Activated CD4-positive, alpha-beta memory T cell treated with anti-CD3 and anti-CD28 coated beads for 36 hours (primary cell): ENCODE measurements at regions of chr14 and their contacts with region 1.

Region 1: DNA sequence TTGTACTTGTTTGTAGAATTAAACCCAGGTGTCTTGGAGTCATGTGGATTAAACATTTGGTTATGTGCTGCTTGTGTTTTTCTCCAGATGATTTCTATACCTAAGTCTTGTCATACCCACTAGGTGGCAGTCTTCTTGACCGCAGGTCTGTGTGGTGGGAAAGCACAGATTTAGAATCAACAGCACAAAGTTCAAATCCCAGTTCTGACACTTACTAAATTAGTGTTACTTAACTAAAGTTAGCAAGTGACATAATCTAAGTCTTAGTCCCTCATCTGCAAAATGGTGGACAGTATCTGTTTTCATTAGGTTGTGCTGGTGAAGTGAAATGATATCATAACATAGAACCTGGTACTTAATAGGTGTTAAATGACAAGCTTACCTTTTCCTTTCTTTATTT is 151.0 kb upstream of the ARHGAP5 start:
- DNase-seq: peak; percentile 21
- H3K4me3 Mint-ChIP-seq: no peak overlapping the region
- H3K27ac Mint-ChIP-seq: no peak overlapping the region
- H3K4me1 Mint-ChIP-seq: peaks cover 17% of the 10 kb centered on the region
- H3K27me3 Mint-ChIP-seq: no peaks in the 10 kb centered on the region

Region 2: DNA sequence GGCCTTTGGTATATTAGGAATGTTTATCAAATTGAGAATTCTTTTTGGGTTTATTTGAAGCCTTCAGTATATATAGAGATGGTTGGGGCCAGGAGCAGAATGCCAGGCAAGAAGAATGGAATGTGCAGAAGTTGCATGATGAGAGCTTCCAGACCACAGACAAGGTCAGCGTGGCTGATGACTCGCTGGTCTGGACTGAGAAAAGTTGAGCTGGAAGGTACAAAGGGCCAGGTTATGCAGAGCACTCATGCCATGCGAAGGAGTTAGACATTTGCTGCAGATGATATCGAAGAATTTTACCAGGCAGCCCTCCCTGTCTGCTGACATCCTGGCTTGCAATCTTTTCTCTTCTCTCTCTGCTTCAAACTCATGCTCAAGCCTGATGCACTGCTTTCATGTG is 45.2 kb before region 1 on chr14:
- CTCF ChIA-PET with region 1: no interaction called
- POLR2A ChIA-PET with region 1: no interaction called
- intact Hi-C with region 1: no loop called
- DNase-seq: no peak
- H3K4me3 Mint-ChIP-seq: no peak overlapping the region
- H3K27ac Mint-ChIP-seq: no peak overlapping the region
- H3K4me1 Mint-ChIP-seq: no peaks in the 10 kb centered on the region
- H3K27me3 Mint-ChIP-seq: no peaks in the 10 kb centered on the region

Region 3: DNA sequence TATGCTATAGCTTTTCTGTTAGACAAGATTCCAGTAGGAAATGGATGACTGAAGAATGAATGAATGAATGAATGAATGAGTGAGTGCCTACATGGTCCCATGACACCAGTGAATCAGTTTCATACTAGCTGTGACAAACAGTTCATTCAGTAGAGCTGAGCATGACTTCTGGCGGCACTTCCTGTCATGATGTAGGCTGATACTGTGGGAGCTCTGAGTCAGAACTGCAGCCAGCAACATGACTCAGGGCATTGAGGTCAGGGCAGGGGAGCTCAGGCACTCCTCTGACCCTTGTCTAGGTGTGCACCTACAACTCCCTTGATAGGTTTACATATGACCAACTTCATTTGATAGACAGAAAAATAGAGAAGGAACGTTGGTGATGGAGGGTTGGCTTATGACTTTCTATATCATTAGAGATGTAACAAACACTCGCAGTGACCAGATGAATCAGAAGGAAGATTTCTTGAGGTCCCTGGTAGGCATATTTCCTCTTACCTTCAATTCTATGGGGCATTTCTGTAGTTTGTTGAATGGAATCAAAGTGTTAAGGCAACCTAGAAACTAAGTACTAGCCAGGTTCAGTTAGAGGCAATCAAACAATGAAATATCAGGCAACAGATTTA is 11.7 kb after region 1 on chr14:
- CTCF ChIA-PET with region 1: interaction called, 30 read pairs
- POLR2A ChIA-PET with region 1: interaction called, 5 read pairs
- intact Hi-C with region 1: loop called (anchors 1 kb)
- DNase-seq: peak; percentile 91
- H3K4me3 Mint-ChIP-seq: peak overlapping the region; percentile 16
- H3K27ac Mint-ChIP-seq: peak overlapping the region; percentile 80
- H3K4me1 Mint-ChIP-seq: peaks cover 25% of the 10 kb centered on the region
- H3K27me3 Mint-ChIP-seq: no peaks in the 10 kb centered on the region

Region 4: GRCh38 chr14:31945074-31945613 is 19.0 kb after region 1 on chr14:
- CTCF ChIA-PET with region 1: interaction called, 30 read pairs
- POLR2A ChIA-PET with region 1: no interaction called
- intact Hi-C with region 1: no loop called
- DNase-seq: peak; percentile 48
- H3K4me3 Mint-ChIP-seq: no peak overlapping the region
- H3K27ac Mint-ChIP-seq: peak overlapping the region; percentile 59
- H3K4me1 Mint-ChIP-seq: peaks cover 44% of the 10 kb centered on the region
- H3K27me3 Mint-ChIP-seq: no peaks in the 10 kb centered on the region

Region 5: GRCh38 chr14:32469388-32470160 is 543.5 kb after region 1 on chr14:
- CTCF ChIA-PET with region 1: no interaction called
- POLR2A ChIA-PET with region 1: no interaction called
- intact Hi-C with region 1: loop called (anchors 2 kb)
- DNase-seq: no peak
- H3K4me3 Mint-ChIP-seq: no peak overlapping the region
- H3K27ac Mint-ChIP-seq: no peak overlapping the region
- H3K4me1 Mint-ChIP-seq: no peaks in the 10 kb centered on the region
- H3K27me3 Mint-ChIP-seq: no peaks in the 10 kb centered on the region

Region 6: GRCh38 chr14:32560209-32560857 is 634.2 kb after region 1 on chr14:
- CTCF ChIA-PET with region 1: interaction called, 4 read pairs
- POLR2A ChIA-PET with region 1: no interaction called
- intact Hi-C with region 1: loop called (anchors 2 kb)
- DNase-seq: peak; percentile 40
- H3K4me3 Mint-ChIP-seq: no peak overlapping the region
- H3K27ac Mint-ChIP-seq: no peak overlapping the region
- H3K4me1 Mint-ChIP-seq: peaks cover 12% of the 10 kb centered on the region
- H3K27me3 Mint-ChIP-seq: no peaks in the 10 kb centered on the region